Naive thymus-derived CD4-positive, alpha-beta T cell (primary cell): ENCODE measurements at regions of chr13 and their contacts with region 1.

Region 1: GRCh38 chr13:45340926-45341750 is at the start of gene TPT1:
- DNase-seq: peak; percentile 99 to 100 (median 99)
- ATAC-seq: peak; percentile 91
- H3K4me3 ChIP-seq: peak within 1 kb of the TSS; percentile 94
- H3K4me3 Mint-ChIP-seq: peak within 1 kb of the TSS; percentile 95 to 100 (median 98)
- H3K27ac ChIP-seq: peak within 1 kb of the TSS; percentile 99
- H3K27ac Mint-ChIP-seq: peak within 1 kb of the TSS; percentile 92 to 100 (median 99)
- H3K4me1 ChIP-seq: peaks cover 35 to 43% of the 10 kb centered on the region in 2 donors
- H3K4me1 Mint-ChIP-seq: peaks cover 35 to 70% (median 57%) of the 10 kb centered on the region in 7 donors
- H3K27me3 ChIP-seq: no peaks in the 10 kb centered on the region
- H3K27me3 Mint-ChIP-seq: no peaks in the 10 kb centered on the region
- total RNA-seq, gene TPT1: 4,230 to 13,134 (median 7,796) TPM

Region 2: GRCh38 chr13:43473437-43473836 is 1867.7 kb before region 1 on chr13:
- CTCF ChIA-PET with region 1: no interaction called
- POLR2A ChIA-PET with region 1: no interaction called
- intact Hi-C with region 1: no loop called
- DNase-seq: no peak
- ATAC-seq: no peak
- H3K4me3 ChIP-seq: no peak overlapping the region
- H3K4me3 Mint-ChIP-seq: no peak overlapping the region
- H3K27ac ChIP-seq: no peak overlapping the region
- H3K27ac Mint-ChIP-seq: no peak overlapping the region
- H3K4me1 ChIP-seq: no peaks in the 10 kb centered on the region
- H3K4me1 Mint-ChIP-seq: no peaks in the 10 kb centered on the region
- H3K27me3 ChIP-seq: no peaks in the 10 kb centered on the region
- H3K27me3 Mint-ChIP-seq: peaks cover 13 to 31% (median 18%) of the 10 kb centered on the region in 5 donors

Region 3: GRCh38 chr13:45119991-45120864 is 220.9 kb before region 1 on chr13 and contains the start of gene GTF2F2:
- CTCF ChIA-PET with region 1: no interaction called
- POLR2A ChIA-PET with region 1: interaction called, 8 read pairs
- intact Hi-C with region 1: loop called (anchors 1 kb)
- DNase-seq: peak; percentile 81 to 89 (median 86)
- ATAC-seq: peak; percentile 80
- H3K4me3 ChIP-seq: peak within 1 kb of the TSS; percentile 80
- H3K4me3 Mint-ChIP-seq: no peak within 1 kb of the TSS
- H3K27ac ChIP-seq: peak within 1 kb of the TSS; percentile 91
- H3K27ac Mint-ChIP-seq: no peak within 1 kb of the TSS
- H3K4me1 ChIP-seq: peaks cover 16 to 21% of the 10 kb centered on the region in 2 donors
- H3K4me1 Mint-ChIP-seq: peaks cover 6 to 17% (median 13%) of the 10 kb centered on the region in 7 donors
- H3K27me3 ChIP-seq: no peaks in the 10 kb centered on the region
- H3K27me3 Mint-ChIP-seq: no peaks in the 10 kb centered on the region
- total RNA-seq, gene GTF2F2: 13.7 to 20.4 (median 15.2) TPM

Region 4: GRCh38 chr13:45393941-45394570 is 52.9 kb after region 1 on chr13:
- CTCF ChIA-PET with region 1: interaction called, 4 read pairs
- POLR2A ChIA-PET with region 1: interaction called, 7 read pairs
- intact Hi-C with region 1: loop called (anchors 1 kb)
- DNase-seq: peak in 1 of 9 donors; percentile 33
- ATAC-seq: peak; percentile 52
- H3K4me3 ChIP-seq: no peak overlapping the region
- H3K4me3 Mint-ChIP-seq: no peak overlapping the region
- H3K27ac ChIP-seq: no peak overlapping the region
- H3K27ac Mint-ChIP-seq: peak overlapping the region in 8 of 9 donors; percentile 16 to 95 (median 72)
- H3K4me1 ChIP-seq: peaks cover 10 to 20% of the 10 kb centered on the region in 2 donors
- H3K4me1 Mint-ChIP-seq: peaks cover 30 to 49% (median 48%) of the 10 kb centered on the region in 7 donors
- H3K27me3 ChIP-seq: no peaks in the 10 kb centered on the region
- H3K27me3 Mint-ChIP-seq: no peaks in the 10 kb centered on the region

Region 5: DNA sequence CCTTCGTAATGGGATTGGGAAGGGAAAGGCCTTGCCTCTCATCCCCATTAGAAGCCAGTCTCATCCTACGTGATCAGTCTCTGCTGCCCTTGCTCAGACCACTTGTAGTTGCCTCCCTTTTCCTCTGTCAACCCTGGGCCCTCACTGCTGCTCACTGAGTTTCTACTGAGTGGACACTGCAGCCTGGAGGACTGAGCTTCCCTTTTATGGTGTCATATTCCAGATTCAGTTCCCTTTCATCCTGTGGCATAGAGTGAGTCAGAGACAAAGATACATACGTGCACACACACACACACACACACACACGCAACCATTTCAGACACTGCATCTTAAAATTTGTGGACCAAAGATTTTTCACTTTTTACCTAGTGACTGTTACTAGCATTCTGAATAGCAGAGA is 180.2 kb after region 1 on chr13:
- CTCF ChIA-PET with region 1: no interaction called
- POLR2A ChIA-PET with region 1: no interaction called
- intact Hi-C with region 1: no loop called
- DNase-seq: no peak
- ATAC-seq: peak; percentile 88
- H3K4me3 ChIP-seq: no peak overlapping the region
- H3K4me3 Mint-ChIP-seq: no peak overlapping the region
- H3K27ac ChIP-seq: no peak overlapping the region
- H3K27ac Mint-ChIP-seq: peak overlapping the region in 6 of 9 donors; percentile 2 to 78 (median 41)
- H3K4me1 ChIP-seq: no peaks in the 10 kb centered on the region
- H3K4me1 Mint-ChIP-seq: peaks cover 0 to 10% (median 4%) of the 10 kb centered on the region in 7 donors
- H3K27me3 ChIP-seq: no peaks in the 10 kb centered on the region
- H3K27me3 Mint-ChIP-seq: no peaks in the 10 kb centered on the region

Region 6: GRCh38 chr13:46176756-46177155 is 835.6 kb after region 1 on chr13:
- CTCF ChIA-PET with region 1: no interaction called
- POLR2A ChIA-PET with region 1: no interaction called
- intact Hi-C with region 1: loop called (anchors 2 kb)
- DNase-seq: no peak
- ATAC-seq: peak; percentile 41
- H3K4me3 ChIP-seq: peak overlapping the region; percentile 66
- H3K4me3 Mint-ChIP-seq: peak overlapping the region; percentile 80 to 99 (median 92)
- H3K27ac ChIP-seq: peak overlapping the region; percentile 82
- H3K27ac Mint-ChIP-seq: peak overlapping the region; percentile 73 to 95 (median 89)
- H3K4me1 ChIP-seq: peaks cover 59 to 60% of the 10 kb centered on the region in 2 donors
- H3K4me1 Mint-ChIP-seq: peaks cover 64 to 81% (median 72%) of the 10 kb centered on the region in 7 donors
- H3K27me3 ChIP-seq: no peaks in the 10 kb centered on the region
- H3K27me3 Mint-ChIP-seq: peaks cover 0 to 3% (median 0%) of the 10 kb centered on the region in 5 donors